Activated naive CD4-positive, alpha-beta T cell treated with anti-CD3 and anti-CD28 coated beads for 36 hours (primary cell): ENCODE measurements at regions of chr14 and their contacts with region 1.

Region 1: GRCh38 chr14:34722717-34723545 is 8.5 kb upstream of the CFL2 start:
- DNase-seq: peak; percentile 54
- H3K4me3 Mint-ChIP-seq: no peak overlapping the region
- H3K27ac Mint-ChIP-seq: no peak overlapping the region
- H3K4me1 Mint-ChIP-seq: no peaks in the 10 kb centered on the region
- H3K27me3 Mint-ChIP-seq: no peaks in the 10 kb centered on the region

Region 2: GRCh38 chr14:34331728-34332623 is 391.0 kb before region 1 on chr14:
- CTCF ChIA-PET with region 1: no interaction called
- intact Hi-C with region 1: loop called (anchors 2 kb)
- DNase-seq: peak; percentile 82
- H3K4me3 Mint-ChIP-seq: no peak overlapping the region
- H3K27ac Mint-ChIP-seq: no peak overlapping the region
- H3K4me1 Mint-ChIP-seq: peaks cover 5% of the 10 kb centered on the region
- H3K27me3 Mint-ChIP-seq: no peaks in the 10 kb centered on the region

Region 3: DNA sequence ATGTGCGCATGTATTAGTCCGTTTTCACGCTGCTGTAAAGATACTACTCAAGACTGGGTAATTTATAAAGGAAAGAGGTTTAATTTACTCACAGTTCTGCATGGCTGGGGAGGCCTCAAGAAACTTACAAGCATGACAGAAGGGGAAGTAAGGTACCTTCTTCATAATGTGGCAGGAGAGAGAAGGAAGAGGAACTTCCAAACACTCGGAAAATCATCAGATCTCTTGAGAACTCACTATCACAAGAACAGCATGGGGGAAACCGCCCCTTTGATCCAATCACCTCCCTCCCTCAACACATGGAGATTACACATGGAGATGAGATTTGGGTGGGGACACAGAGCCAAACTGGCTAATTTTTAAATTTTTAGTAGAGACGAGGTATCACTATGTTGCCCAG is 51.2 kb before region 1 on chr14:
- CTCF ChIA-PET with region 1: interaction called, 77 read pairs
- intact Hi-C with region 1: loop called (anchors 1 kb)
- DNase-seq: no peak
- H3K4me3 Mint-ChIP-seq: no peak overlapping the region
- H3K27ac Mint-ChIP-seq: no peak overlapping the region
- H3K4me1 Mint-ChIP-seq: no peaks in the 10 kb centered on the region
- H3K27me3 Mint-ChIP-seq: no peaks in the 10 kb centered on the region

Region 4: DNA sequence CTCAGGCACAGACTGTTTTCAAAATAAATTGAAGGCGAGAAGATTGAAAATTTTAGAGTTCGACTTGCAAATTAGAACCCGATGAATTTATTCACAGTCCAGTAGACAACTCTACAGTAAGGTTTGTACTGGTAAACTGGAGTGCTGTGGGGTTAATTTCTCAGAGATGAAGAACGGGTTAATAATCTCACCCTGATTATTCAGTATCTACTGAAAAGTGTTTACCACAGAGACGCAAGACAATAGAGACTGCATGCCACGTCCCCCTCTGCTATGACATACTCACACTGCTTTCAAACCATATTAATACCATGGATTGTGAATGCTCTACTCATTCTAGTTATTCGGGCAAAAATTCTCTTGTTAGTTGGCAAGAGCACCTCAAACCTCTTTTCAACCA is 44.6 kb before region 1 on chr14:
- CTCF ChIA-PET with region 1: interaction called, 77 read pairs
- intact Hi-C with region 1: no loop called
- DNase-seq: no peak
- H3K4me3 Mint-ChIP-seq: no peak overlapping the region
- H3K27ac Mint-ChIP-seq: no peak overlapping the region
- H3K4me1 Mint-ChIP-seq: peaks cover 6% of the 10 kb centered on the region
- H3K27me3 Mint-ChIP-seq: no peaks in the 10 kb centered on the region

Region 5: GRCh38 chr14:34733235-34733634 is 10.3 kb after region 1 on chr14:
- CTCF ChIA-PET with region 1: interaction called, 13 read pairs
- intact Hi-C with region 1: no loop called
- DNase-seq: no peak
- H3K4me3 Mint-ChIP-seq: no peak overlapping the region
- H3K27ac Mint-ChIP-seq: no peak overlapping the region
- H3K4me1 Mint-ChIP-seq: no peaks in the 10 kb centered on the region
- H3K27me3 Mint-ChIP-seq: no peaks in the 10 kb centered on the region

Region 6: DNA sequence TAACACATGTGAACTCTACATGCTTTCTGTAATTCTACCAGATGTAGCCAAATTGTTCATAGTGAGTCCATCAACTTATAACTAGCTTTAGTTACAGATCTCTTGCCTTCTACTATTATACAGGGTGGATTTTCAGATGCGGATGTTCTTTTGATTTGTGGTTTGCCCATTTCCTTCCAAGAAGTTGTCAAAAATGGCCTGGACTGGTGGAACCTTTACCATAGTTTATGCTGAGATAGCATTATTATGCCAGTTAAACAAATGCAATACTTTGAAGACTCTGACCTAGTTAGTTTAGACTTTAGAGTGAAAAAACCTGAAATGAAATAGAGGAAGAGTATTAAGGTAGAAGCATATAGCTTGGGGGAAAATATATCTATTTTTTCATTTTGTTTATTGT is 18.9 kb after region 1 on chr14:
- CTCF ChIA-PET with region 1: interaction called, 13 read pairs
- intact Hi-C with region 1: no loop called
- DNase-seq: no peak
- H3K4me3 Mint-ChIP-seq: no peak overlapping the region
- H3K27ac Mint-ChIP-seq: no peak overlapping the region
- H3K4me1 Mint-ChIP-seq: peaks cover 17% of the 10 kb centered on the region
- H3K27me3 Mint-ChIP-seq: no peaks in the 10 kb centered on the region

Region 7: GRCh38 chr14:34997762-34998161 is 274.8 kb after region 1 on chr14:
- CTCF ChIA-PET with region 1: no interaction called
- intact Hi-C with region 1: no loop called
- DNase-seq: no peak
- H3K4me3 Mint-ChIP-seq: no peak overlapping the region
- H3K27ac Mint-ChIP-seq: no peak overlapping the region
- H3K4me1 Mint-ChIP-seq: peaks cover 15% of the 10 kb centered on the region
- H3K27me3 Mint-ChIP-seq: no peaks in the 10 kb centered on the region